ENCODE measurements at regions of chrX and their contacts with region 1.

Region 1: GRCh38 chrX:132968296-132968949 is 10.0 kb upstream of the HS6ST2 start:
- DNase-seq: no peak

Region 2: DNA sequence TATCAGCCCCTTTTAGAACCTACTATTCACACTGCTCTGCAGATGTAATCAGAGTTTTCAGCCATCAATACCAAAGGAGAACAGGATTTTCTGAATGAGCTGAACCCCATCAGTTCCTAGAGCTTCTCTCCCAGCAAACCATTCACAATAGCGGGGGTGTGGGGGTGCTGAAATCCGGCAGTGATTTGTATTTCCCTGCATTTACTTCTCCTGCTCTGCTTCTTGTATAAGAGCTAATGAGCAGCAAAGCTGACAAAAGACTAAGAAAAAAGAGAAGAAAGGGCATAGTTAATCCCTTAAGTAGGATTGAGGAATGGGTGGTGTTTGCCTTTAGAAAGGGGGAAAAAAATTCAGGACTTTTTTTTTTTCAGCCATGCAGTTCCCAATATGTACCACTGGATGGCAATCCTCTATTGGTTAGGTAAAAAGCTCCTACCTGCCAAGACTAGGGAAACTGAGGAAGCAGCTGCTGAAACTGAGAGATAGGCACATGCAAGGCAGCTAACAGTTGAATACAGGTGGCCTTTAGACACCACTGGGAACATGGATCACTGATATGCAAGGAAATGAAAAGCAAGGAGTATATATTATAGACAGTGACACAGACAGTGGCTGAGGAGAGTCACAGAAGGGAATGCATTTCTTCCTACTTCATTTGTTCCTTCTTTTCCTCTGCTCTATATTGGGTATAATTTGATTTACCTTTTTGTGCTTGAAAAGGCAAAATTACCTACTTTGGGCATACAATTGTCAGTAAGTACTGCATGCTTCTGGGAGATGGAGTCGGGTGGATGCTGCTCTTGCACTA is 227.9 kb before region 1 on chrX:
- intact Hi-C with region 1: loop called (anchors 5 kb)
- DNase-seq: no peak